ENCODE measurements at regions of chr17 and their contacts with region 1.

Region 1: GRCh38 chr17:35088881-35089585 is 25.5 kb upstream of the RFFL start:
- DNase-seq: no peak
- ATAC-seq: peak; percentile 83
- H3K4me3 ChIP-seq: peak overlapping the region; percentile 80
- H3K27ac ChIP-seq: peak overlapping the region; percentile 96
- H3K4me1 ChIP-seq: peaks cover 9% of the 10 kb centered on the region
- H3K27me3 ChIP-seq: no peaks in the 10 kb centered on the region
- CTCF ChIP-seq: peak; percentile 70 to 84 (median 76); a peak in 5 of 6 replicates
- EP300 ChIP-seq: peak in 1 of 2 experiments; percentile 62; a peak in 1 of 4 replicates
- POLR2A ChIP-seq: peak; percentile 87
- RAD21 ChIP-seq: peak; percentile 73

Region 2: GRCh38 chr17:34980681-34981537 is 108.1 kb before region 1 on chr17:
- CTCF ChIA-PET with region 1: interaction called, 12 read pairs
- POLR2A ChIA-PET with region 1: interaction called, 6 read pairs
- RAD21 ChIA-PET with region 1: interaction called, 17 read pairs
- SMC1A ChIA-PET with region 1: interaction called, 4 read pairs
- in situ Hi-C with region 1: no loop called
- intact Hi-C with region 1: loop called (anchors 5 kb)
- DNase-seq: peak; percentile 27
- ATAC-seq: peak; percentile 89
- H3K4me3 ChIP-seq: peak overlapping the region; percentile 89
- H3K27ac ChIP-seq: peak overlapping the region; percentile 85
- H3K4me1 ChIP-seq: peaks cover 12% of the 10 kb centered on the region
- H3K27me3 ChIP-seq: no peaks in the 10 kb centered on the region
- CTCF ChIP-seq: peak; percentile 18 to 34 (median 26); a peak in 2 of 6 replicates
- EP300 ChIP-seq: no peak
- POLR2A ChIP-seq: peak; percentile 77
- RAD21 ChIP-seq: 0 out of 2 replicates have a peak, but pooled peaks have one; percentile 19

Region 3: GRCh38 chr17:34998205-34998604 is 90.8 kb before region 1 on chr17:
- CTCF ChIA-PET with region 1: interaction called, 40 read pairs
- POLR2A ChIA-PET with region 1: no interaction called
- RAD21 ChIA-PET with region 1: interaction called, 14 read pairs
- SMC1A ChIA-PET with region 1: interaction called, 29 read pairs
- in situ Hi-C with region 1: loop called (anchors 5 kb)
- intact Hi-C with region 1: loop called (anchors 1 kb)
- DNase-seq: peak; percentile 40
- ATAC-seq: peak; percentile 97
- H3K4me3 ChIP-seq: no peak overlapping the region
- H3K27ac ChIP-seq: no peak overlapping the region
- H3K4me1 ChIP-seq: no peaks in the 10 kb centered on the region; the same call in 1 of the 2 replicates
- H3K27me3 ChIP-seq: no peaks in the 10 kb centered on the region
- CTCF ChIP-seq: peak; percentile 94 to 97 (median 97); a peak in 5 of 6 replicates
- EP300 ChIP-seq: no peak
- POLR2A ChIP-seq: no peak
- RAD21 ChIP-seq: peak; percentile 99

Region 4: DNA sequence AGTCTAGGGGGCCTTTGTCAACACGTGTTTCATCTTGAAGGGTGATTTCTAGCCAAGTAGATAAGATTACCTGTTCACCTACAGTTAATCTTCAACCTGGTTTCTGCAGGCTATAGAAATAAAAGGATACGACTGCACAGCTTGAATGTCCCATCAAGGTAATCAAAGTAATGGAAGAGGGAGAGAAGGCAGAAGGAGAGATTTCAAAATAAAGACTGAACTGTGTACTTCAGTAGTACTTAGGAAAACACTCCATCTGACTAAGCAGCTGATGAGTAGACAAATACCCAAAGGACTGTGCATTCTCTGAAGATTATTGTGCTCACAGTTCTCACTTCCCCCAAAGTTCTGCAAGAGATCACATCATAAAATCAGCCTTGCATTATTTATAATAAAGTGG is 19.7 kb before region 1 on chr17:
- CTCF ChIA-PET with region 1: interaction called, 23 read pairs
- POLR2A ChIA-PET with region 1: interaction called, 115 read pairs
- RAD21 ChIA-PET with region 1: interaction called, 452 read pairs
- SMC1A ChIA-PET with region 1: interaction called, 534 read pairs
- in situ Hi-C with region 1: no loop called
- intact Hi-C with region 1: no loop called
- DNase-seq: no peak
- ATAC-seq: peak; percentile 68
- H3K4me3 ChIP-seq: no peak overlapping the region
- H3K27ac ChIP-seq: peak overlapping the region; percentile 33
- H3K4me1 ChIP-seq: peaks cover 33% of the 10 kb centered on the region
- H3K27me3 ChIP-seq: no peaks in the 10 kb centered on the region
- CTCF ChIP-seq: no peak
- EP300 ChIP-seq: no peak
- POLR2A ChIP-seq: no peak
- RAD21 ChIP-seq: no peak

Region 5: DNA sequence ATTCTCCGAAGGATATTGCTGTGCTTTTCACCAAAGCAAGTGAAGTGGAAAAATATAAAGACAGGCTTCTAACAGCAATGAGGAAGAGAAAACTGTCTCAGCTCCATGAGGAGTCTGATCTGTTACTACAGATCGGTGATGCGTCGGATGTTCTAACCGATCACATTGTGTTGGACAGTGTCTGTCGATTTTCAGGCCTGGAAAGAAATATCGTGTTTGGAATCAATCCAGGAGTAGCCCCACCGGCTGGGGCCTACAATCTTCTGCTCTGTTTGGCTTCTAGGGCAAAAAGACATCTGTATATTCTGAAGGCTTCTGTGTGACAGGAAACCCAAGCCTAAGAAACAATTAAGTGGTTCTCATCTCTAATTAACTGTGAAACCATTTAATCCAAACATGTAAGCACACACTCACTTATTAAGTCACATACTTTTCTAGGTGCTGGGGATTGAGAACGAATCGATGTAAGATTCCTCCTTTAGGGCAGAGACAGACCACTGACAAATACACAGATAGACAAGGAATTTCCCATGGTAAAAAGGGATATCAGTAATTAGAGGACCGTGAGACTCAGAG is 176.6 kb after region 1 on chr17:
- CTCF ChIA-PET with region 1: no interaction called
- POLR2A ChIA-PET with region 1: no interaction called
- RAD21 ChIA-PET with region 1: no interaction called
- SMC1A ChIA-PET with region 1: no interaction called
- in situ Hi-C with region 1: no loop called
- intact Hi-C with region 1: no loop called
- DNase-seq: no peak
- ATAC-seq: no peak
- H3K4me3 ChIP-seq: no peak overlapping the region
- H3K27ac ChIP-seq: no peak overlapping the region
- H3K4me1 ChIP-seq: no peaks in the 10 kb centered on the region
- H3K27me3 ChIP-seq: no peaks in the 10 kb centered on the region
- CTCF ChIP-seq: no peak
- EP300 ChIP-seq: no peak
- POLR2A ChIP-seq: no peak
- RAD21 ChIP-seq: no peak

Region 6: DNA sequence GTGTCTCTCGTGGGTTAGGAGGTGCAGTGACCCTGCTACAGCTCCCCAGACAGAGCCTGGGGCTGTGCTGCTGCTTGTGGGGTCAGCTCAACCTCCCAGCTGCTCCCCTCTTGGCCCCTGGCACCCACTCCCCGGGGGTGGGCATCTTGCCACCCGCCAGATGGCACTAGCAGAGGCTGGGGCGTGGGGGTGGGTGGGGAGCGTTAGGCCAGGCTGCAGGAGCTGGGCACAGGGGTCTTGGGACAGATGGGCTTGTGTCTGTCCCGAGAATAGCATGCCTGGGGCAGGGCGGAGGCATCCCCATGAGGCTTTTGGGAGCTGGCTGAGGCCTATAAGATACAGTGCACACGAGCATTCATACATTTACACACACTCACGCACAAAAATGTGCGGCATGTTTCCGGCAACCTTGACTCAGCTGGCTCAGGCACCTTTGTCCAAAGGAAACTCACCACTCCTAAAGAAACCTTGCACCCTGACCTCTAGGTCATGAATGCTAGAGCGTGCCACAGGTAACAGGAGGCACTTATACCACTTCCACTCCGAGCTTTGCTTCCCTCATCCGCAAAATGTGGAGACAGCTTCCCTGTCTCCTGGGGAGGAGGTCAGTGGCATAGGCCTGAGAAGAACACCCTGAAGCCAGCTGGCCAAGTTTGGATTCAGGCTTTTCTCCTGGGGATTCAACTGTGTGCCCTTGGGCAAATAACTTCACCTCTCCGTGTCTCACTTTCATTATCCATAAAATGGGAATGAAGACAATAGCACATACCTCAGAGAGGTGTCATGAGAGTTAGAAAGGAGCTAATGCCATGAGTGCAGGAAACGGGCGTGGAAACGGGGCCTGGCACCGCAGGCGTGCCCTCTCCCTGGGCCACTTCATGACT is 1769.3 kb after region 1 on chr17:
- CTCF ChIA-PET with region 1: no interaction called
- POLR2A ChIA-PET with region 1: no interaction called
- RAD21 ChIA-PET with region 1: no interaction called
- SMC1A ChIA-PET with region 1: no interaction called
- in situ Hi-C with region 1: no loop called
- intact Hi-C with region 1: no loop called
- DNase-seq: no peak
- ATAC-seq: no peak
- H3K4me3 ChIP-seq: no peak overlapping the region
- H3K27ac ChIP-seq: no peak overlapping the region
- H3K4me1 ChIP-seq: peaks cover 7% of the 10 kb centered on the region; the same call in 1 of the 2 replicates
- H3K27me3 ChIP-seq: no peaks in the 10 kb centered on the region; a peak in 1 of 4 replicates
- CTCF ChIP-seq: no peak
- EP300 ChIP-seq: no peak
- POLR2A ChIP-seq: no peak
- RAD21 ChIP-seq: no peak

Measured in GM12878 (cell line).